ENCODE measurements at regions of chr14 and their contacts with region 1.

Region 1: GRCh38 chr14:90697577-90698206 is 118.5 kb downstream of the TTC7B start:
- DNase-seq: peak; percentile 91
- H3K4me3 Mint-ChIP-seq: no peak overlapping the region
- H3K27ac Mint-ChIP-seq: no peak overlapping the region
- H3K4me1 Mint-ChIP-seq: no peaks in the 10 kb centered on the region
- H3K27me3 Mint-ChIP-seq: no peaks in the 10 kb centered on the region

Region 2: DNA sequence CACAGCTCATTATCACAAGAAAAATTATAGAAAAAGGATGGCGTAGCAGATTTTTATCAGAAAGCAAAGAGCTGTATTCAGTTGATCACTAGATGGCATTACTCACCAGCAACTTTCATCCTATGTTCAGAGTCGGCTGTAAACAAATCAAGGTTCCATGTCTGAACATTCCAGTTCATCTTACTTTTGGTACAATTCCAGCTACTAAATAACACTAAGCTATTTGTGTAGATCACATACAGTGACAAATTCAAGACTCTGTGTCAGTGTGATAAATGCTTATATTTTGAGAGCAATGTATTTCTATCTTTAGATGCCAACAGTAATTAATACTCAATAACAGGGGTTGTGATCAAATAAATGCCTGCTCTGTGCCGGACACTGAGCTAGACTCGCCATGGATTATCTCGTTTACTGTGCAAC is 396.0 kb before region 1 on chr14:
- CTCF ChIA-PET with region 1: interaction called, 20 read pairs
- intact Hi-C with region 1: loop called (anchors 1 kb)
- DNase-seq: no peak
- H3K4me3 Mint-ChIP-seq: no peak overlapping the region
- H3K27ac Mint-ChIP-seq: no peak overlapping the region
- H3K4me1 Mint-ChIP-seq: peaks cover 8% of the 10 kb centered on the region
- H3K27me3 Mint-ChIP-seq: no peaks in the 10 kb centered on the region

Region 3: GRCh38 chr14:90368946-90369721 is 328.6 kb before region 1 on chr14:
- CTCF ChIA-PET with region 1: interaction called, 5 read pairs
- intact Hi-C with region 1: loop called (anchors 1 kb)
- DNase-seq: no peak
- H3K4me3 Mint-ChIP-seq: no peak overlapping the region
- H3K27ac Mint-ChIP-seq: no peak overlapping the region
- H3K4me1 Mint-ChIP-seq: no peaks in the 10 kb centered on the region
- H3K27me3 Mint-ChIP-seq: no peaks in the 10 kb centered on the region

Region 4: DNA sequence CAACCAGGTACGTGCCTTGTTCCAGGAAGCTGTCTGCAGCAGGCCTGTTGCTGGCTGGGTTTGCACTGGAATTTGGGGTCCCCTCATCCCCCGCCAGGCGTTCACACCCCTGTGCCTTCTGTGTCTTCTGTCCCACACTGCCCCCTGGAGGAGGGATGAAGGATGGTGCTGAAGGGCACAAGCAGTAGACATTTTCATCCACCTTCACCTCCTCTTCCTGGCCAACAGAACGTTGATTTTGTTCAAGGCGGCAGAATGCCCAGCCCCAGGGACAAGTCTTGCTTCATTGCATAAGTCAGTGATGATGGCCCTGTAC is 178.8 kb before region 1 on chr14:
- CTCF ChIA-PET with region 1: interaction called, 5 read pairs
- intact Hi-C with region 1: loop called (anchors 2 kb)
- DNase-seq: peak; percentile 71
- H3K4me3 Mint-ChIP-seq: no peak overlapping the region
- H3K27ac Mint-ChIP-seq: no peak overlapping the region
- H3K4me1 Mint-ChIP-seq: no peaks in the 10 kb centered on the region
- H3K27me3 Mint-ChIP-seq: no peaks in the 10 kb centered on the region

Region 5: GRCh38 chr14:90658541-90658967 is 39.1 kb before region 1 on chr14:
- CTCF ChIA-PET with region 1: interaction called, 10 read pairs
- intact Hi-C with region 1: no loop called
- DNase-seq: peak; percentile 55
- H3K4me3 Mint-ChIP-seq: no peak overlapping the region
- H3K27ac Mint-ChIP-seq: no peak overlapping the region
- H3K4me1 Mint-ChIP-seq: peaks cover 11% of the 10 kb centered on the region
- H3K27me3 Mint-ChIP-seq: no peaks in the 10 kb centered on the region

Region 6: DNA sequence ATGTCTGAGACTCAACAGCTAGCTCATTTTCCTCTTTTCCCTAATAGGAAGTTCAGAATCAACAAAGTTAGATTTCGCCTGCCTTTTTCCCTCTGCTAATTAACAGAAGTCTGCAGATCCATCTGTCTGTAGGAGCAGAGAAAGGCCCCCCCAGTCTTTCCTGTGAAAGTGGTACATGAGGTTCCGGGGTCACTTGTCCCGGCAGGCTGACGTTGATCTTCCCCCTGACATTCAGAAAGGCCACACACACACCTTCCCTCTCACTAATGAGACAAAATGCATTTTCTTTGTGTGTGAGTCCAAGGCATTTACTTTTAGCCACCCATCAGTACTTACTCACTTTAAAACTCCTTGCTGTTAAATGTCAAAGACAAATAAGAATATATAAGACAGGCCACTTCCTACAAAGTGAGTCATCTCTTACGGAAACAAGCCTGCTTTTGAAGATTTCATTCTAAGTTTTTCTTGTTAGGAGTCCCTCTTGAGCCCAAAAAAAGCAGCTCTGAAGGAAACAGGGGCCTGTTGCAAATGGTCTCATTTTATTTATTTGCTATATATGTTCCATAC is 20.1 kb before region 1 on chr14:
- CTCF ChIA-PET with region 1: interaction called, 18 read pairs
- intact Hi-C with region 1: no loop called
- DNase-seq: peak; percentile 37
- H3K4me3 Mint-ChIP-seq: peak overlapping the region; percentile 16
- H3K27ac Mint-ChIP-seq: peak overlapping the region; percentile 82
- H3K4me1 Mint-ChIP-seq: peaks cover 38% of the 10 kb centered on the region
- H3K27me3 Mint-ChIP-seq: no peaks in the 10 kb centered on the region

Measured in activated naive CD4-positive, alpha-beta T cell treated with anti-CD3 and anti-CD28 coated beads for 36 hours (primary cell).